Sigmoid colon (tissue), 7 donors: ENCODE measurements at regions of chr2 and their contacts with region 1.

Region 1: GRCh38 chr2:74529357-74530238 is at the starts of genes AUP1 and HTRA2:
- DNase-seq: peak; percentile 99
- H3K4me3 ChIP-seq: peak within 1 kb of the TSS; percentile 72 to 96 (median 84)
- H3K27ac ChIP-seq: peak within 1 kb of the TSS; percentile 84 to 92 (median 89)
- H3K4me1 ChIP-seq: peaks cover 0 to 34% (median 24%) of the 10 kb centered on the region in 4 donors
- H3K27me3 ChIP-seq: no peaks in the 10 kb centered on the region
- CTCF ChIP-seq: no peak
- EP300 ChIP-seq: peak in 2 of 4 donors; percentile 22 to 59
- POLR2A ChIP-seq: peak; percentile 81 to 89
- total RNA-seq, gene AUP1: 76.5 to 133 (median 83.1) TPM
- total RNA-seq, gene HTRA2: 28.2 to 39.3 (median 31.8) TPM

Region 2: GRCh38 chr2:74507145-74507925 is 22.3 kb before region 1 on chr2 and contains the start of gene PCGF1:
- intact Hi-C with region 1: loop called (anchors 1 kb)
- DNase-seq: peak; percentile 99
- H3K4me3 ChIP-seq: peak within 1 kb of the TSS; percentile 60 to 87 (median 76)
- H3K27ac ChIP-seq: peak within 1 kb of the TSS; percentile 96 to 99 (median 97)
- H3K4me1 ChIP-seq: peaks cover 0 to 46% (median 37%) of the 10 kb centered on the region in 4 donors
- H3K27me3 ChIP-seq: peaks cover 6 to 75% (median 34%) of the 10 kb centered on the region in 3 donors
- CTCF ChIP-seq: peak in 2 of 4 experiments; percentile 12 to 17
- EP300 ChIP-seq: no peak
- POLR2A ChIP-seq: no peak
- total RNA-seq, gene PCGF1: 8.9 to 22.8 (median 16.0) TPM

Region 3: DNA sequence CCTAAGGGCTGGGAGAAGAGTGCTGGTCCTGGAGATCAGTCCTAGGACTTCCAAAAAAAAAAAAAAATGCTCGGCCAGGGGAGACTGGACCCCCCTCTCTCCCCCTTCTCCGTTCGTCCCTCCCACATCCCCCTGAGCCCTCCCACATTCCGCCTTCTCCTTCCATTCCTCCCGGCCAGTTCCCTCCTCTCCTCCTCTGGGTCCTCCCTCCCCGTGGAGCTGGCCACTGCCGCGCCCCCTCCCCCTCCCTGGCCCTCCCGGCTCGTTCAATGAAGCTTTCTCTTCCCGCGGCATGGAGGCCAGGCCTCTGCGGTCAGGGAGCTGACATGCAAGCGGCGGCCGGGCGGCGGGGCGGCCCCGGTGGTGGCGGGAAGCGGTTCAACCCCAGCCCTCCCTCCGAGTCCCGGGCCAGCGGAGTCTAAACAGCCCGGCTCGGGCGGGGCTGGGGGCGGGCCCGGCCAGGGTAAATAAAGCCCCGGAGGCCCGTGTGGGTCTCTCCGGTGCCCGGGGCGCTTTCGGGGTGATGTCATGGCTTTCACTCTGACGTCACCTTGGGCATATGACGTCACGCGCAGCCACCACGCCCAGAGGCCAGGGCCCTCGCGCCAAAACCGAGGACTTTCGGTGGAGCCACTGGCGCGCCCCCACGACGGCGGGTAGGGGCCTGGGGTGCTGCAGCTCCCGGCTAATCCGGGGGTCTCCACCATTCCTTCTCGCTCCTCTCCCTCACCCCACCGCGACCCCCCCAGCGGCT is 24.5 kb after region 1 on chr2 and contains the start of gene LOXL3:
- intact Hi-C with region 1: loop called (anchors 2 kb)
- DNase-seq: peak; percentile 94
- H3K4me3 ChIP-seq: peak within 1 kb of the TSS; percentile 57 to 79 (median 68)
- H3K27ac ChIP-seq: peak within 1 kb of the TSS; percentile 88 to 92 (median 89)
- H3K4me1 ChIP-seq: peaks cover 0 to 28% (median 23%) of the 10 kb centered on the region in 4 donors
- H3K27me3 ChIP-seq: no peaks in the 10 kb centered on the region
- CTCF ChIP-seq: no peak
- EP300 ChIP-seq: peak in 1 of 4 donors; percentile 37
- POLR2A ChIP-seq: no peak
- total RNA-seq, gene LOXL3: 5.4 to 7.9 (median 7.8) TPM

Region 4: GRCh38 chr2:74587664-74588277 is 58.2 kb after region 1 on chr2:
- intact Hi-C with region 1: loop called (anchors 5 kb)
- DNase-seq: peak; percentile 84
- H3K4me3 ChIP-seq: no peak overlapping the region
- H3K27ac ChIP-seq: no peak overlapping the region
- H3K4me1 ChIP-seq: no peaks in the 10 kb centered on the region
- H3K27me3 ChIP-seq: peaks cover 0 to 11% (median 5%) of the 10 kb centered on the region in 3 donors
- CTCF ChIP-seq: peak in 3 of 4 experiments; percentile 65 to 71 (median 67)
- EP300 ChIP-seq: no peak
- POLR2A ChIP-seq: no peak

Region 5: DNA sequence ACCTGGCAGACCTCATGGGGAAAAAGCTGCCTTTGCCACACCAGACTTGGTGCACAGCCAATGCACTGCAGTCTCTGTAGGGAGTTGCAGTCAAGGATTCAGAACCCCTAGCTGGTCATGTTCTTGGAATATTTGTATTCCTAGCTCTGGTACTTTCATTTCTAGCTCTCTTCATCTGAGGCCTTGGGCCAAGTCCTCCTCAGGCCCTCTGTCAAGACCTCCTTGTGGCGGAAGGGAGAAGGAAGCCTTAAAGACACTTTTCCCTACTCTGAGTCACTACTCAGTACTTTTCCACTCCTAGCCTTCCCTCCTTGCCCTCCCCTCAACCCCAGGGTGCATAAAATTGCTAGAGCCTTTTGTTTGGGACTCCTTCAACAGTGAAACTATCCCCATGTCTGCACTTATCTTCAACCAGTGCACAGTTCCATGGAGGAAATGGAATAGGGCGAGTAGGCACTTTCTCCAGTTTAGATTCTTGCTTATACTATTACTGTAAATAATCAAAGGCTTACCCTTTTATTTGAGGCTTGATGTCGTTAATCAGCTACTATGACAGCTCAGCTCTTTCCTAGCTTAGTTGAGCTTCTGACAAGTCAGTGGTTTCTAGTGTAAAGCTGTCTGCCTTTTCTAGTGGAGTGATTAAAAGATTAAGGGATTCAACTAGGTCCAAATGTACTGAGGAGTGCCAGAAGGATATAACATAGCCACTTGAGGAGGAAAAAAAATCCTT is 102.8 kb after region 1 on chr2:
- intact Hi-C with region 1: no loop called
- DNase-seq: no peak
- H3K4me3 ChIP-seq: no peak overlapping the region
- H3K27ac ChIP-seq: no peak overlapping the region
- H3K4me1 ChIP-seq: no peaks in the 10 kb centered on the region
- H3K27me3 ChIP-seq: no peaks in the 10 kb centered on the region
- CTCF ChIP-seq: no peak
- EP300 ChIP-seq: no peak
- POLR2A ChIP-seq: no peak